Left lung (tissue), 14 donors: ENCODE measurements at regions of chr2 and their contacts with region 1.

Region 1: GRCh38 chr2:74876081-74876886 is 42.4 kb downstream of the HK2 start:
- DNase-seq: peak in 2 of 4 donors; percentile 40 to 55
- ATAC-seq: peak; percentile 75
- H3K4me3 ChIP-seq: no peak overlapping the region
- H3K27ac ChIP-seq: peak overlapping the region; percentile 31 to 92
- H3K4me1 ChIP-seq: peaks cover 11 to 50% of the 10 kb centered on the region in 2 donors
- H3K27me3 ChIP-seq: no peaks in the 10 kb centered on the region
- CTCF ChIP-seq: peak; percentile 66 to 74

Region 2: DNA sequence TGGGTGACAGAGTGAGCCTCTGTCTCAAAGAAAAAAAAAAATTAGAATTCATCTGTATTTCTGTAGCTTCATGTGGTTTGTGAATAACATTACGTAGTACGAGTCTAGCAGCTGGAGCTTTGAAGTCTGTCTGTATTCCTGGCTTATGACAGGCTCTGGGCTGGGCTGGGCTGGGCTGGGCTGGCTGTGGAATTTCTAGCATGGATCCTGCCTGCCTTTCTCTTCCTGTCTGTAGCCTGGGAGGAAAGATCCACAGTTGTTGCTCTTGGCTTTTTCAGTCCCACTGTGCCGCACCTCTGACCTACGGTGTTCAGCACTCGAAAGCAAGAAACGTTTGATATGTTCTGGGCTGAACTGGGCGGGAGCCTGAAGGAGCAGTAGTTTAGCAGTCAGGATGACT is 784.0 kb before region 1 on chr2:
- intact Hi-C with region 1: no loop called
- DNase-seq: no peak
- ATAC-seq: no peak
- H3K4me3 ChIP-seq: no peak overlapping the region
- H3K27ac ChIP-seq: no peak overlapping the region
- H3K4me1 ChIP-seq: no peaks in the 10 kb centered on the region
- H3K27me3 ChIP-seq: no peaks in the 10 kb centered on the region
- CTCF ChIP-seq: no peak

Region 3: DNA sequence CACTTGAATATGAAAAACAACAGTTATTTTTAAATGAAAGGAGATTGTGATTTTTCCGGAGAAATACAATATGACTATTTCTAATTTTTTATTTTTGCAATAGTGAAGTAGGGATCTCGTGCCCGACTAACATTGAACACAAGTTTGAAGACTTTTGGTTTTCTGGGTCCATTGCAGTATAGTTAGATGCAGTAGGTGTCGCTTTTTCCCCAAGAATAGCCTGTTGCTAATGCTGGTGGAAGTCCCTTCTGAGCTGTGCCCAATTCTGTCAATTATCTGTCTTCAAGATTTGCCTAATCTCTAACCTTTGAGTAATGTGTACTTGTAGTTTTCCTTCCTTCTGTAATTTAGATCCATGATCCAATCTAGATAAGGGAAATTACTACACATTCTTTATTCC is 185.7 kb before region 1 on chr2:
- intact Hi-C with region 1: loop called in 1 of 2 experiments (anchors 5 kb)
- DNase-seq: peak in 2 of 4 donors; percentile 29 to 61
- ATAC-seq: peak; percentile 96
- H3K4me3 ChIP-seq: no peak overlapping the region
- H3K27ac ChIP-seq: no peak overlapping the region
- H3K4me1 ChIP-seq: peaks cover 0 to 23% of the 10 kb centered on the region in 2 donors
- H3K27me3 ChIP-seq: no peaks in the 10 kb centered on the region
- CTCF ChIP-seq: peak; percentile 59 to 66

Region 4: DNA sequence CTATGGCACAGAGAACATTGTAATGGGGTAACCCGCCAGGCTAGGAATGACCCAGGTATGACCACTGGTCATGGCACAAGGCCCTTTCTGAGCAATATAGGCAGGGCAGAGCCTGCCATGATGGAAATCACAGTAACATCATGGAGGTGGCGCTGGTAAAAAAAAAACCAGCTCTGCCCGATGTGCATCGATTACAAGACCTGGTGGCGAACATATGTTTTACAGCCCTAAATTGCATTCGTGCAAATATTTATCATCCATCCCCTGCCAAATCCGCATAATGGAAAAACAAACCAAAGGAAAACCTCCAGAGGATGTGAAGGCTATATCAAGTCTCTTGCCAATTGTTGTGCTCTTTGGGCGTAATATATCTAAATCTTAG is 161.6 kb before region 1 on chr2:
- intact Hi-C with region 1: loop called (anchors 5 kb)
- DNase-seq: no peak
- ATAC-seq: no peak
- H3K4me3 ChIP-seq: peak overlapping the region in 1 of 2 donors; percentile 56
- H3K27ac ChIP-seq: no peak overlapping the region
- H3K4me1 ChIP-seq: peaks cover 0 to 6% of the 10 kb centered on the region in 2 donors
- H3K27me3 ChIP-seq: peaks cover 0 to 29% of the 10 kb centered on the region in 2 donors
- CTCF ChIP-seq: no peak